Sigmoid colon (tissue), 7 donors: ENCODE measurements at regions of chr3 and their contacts with region 1.

Region 1: GRCh38 chr3:160869818-160870217 is 113.8 kb downstream of the PPM1L start:
- DNase-seq: no peak
- H3K4me3 ChIP-seq: no peak overlapping the region
- H3K27ac ChIP-seq: no peak overlapping the region
- H3K4me1 ChIP-seq: peaks cover 0 to 13% (median 7%) of the 10 kb centered on the region in 4 donors
- H3K27me3 ChIP-seq: no peaks in the 10 kb centered on the region
- CTCF ChIP-seq: no peak
- EP300 ChIP-seq: no peak
- POLR2A ChIP-seq: no peak

Region 2: DNA sequence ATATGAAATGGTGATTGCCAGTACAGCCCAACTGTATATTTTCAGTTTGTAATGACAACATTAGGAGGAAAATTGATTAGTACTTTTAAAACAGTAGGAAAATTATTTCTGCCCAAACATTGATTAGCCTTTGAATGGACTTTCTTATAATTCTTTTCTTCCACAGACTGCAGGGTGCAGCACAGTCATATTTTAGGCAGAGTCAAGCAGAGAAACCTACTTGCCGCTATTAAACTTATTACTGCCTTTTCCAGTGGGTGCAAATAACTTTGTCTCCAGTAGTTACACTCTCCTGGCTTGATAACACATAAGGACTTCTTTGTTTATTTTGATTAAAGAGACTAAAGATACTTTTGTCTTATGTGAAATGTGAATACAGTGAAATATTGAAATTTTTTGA is 28.4 kb before region 1 on chr3:
- intact Hi-C with region 1: loop called (anchors 1 kb)
- DNase-seq: no peak
- H3K4me3 ChIP-seq: no peak overlapping the region
- H3K27ac ChIP-seq: no peak overlapping the region
- H3K4me1 ChIP-seq: no peaks in the 10 kb centered on the region
- H3K27me3 ChIP-seq: no peaks in the 10 kb centered on the region
- CTCF ChIP-seq: no peak
- EP300 ChIP-seq: no peak
- POLR2A ChIP-seq: no peak

Region 3: GRCh38 chr3:161540594-161540993 is 670.8 kb after region 1 on chr3:
- intact Hi-C with region 1: no loop called
- DNase-seq: no peak
- H3K4me3 ChIP-seq: no peak overlapping the region
- H3K27ac ChIP-seq: no peak overlapping the region
- H3K4me1 ChIP-seq: no peaks in the 10 kb centered on the region
- H3K27me3 ChIP-seq: no peaks in the 10 kb centered on the region
- CTCF ChIP-seq: no peak
- EP300 ChIP-seq: no peak
- POLR2A ChIP-seq: no peak